CD8-positive, alpha-beta T cell (primary cell): ENCODE measurements at regions of chr20 and their contacts with region 1.

Region 1: DNA sequence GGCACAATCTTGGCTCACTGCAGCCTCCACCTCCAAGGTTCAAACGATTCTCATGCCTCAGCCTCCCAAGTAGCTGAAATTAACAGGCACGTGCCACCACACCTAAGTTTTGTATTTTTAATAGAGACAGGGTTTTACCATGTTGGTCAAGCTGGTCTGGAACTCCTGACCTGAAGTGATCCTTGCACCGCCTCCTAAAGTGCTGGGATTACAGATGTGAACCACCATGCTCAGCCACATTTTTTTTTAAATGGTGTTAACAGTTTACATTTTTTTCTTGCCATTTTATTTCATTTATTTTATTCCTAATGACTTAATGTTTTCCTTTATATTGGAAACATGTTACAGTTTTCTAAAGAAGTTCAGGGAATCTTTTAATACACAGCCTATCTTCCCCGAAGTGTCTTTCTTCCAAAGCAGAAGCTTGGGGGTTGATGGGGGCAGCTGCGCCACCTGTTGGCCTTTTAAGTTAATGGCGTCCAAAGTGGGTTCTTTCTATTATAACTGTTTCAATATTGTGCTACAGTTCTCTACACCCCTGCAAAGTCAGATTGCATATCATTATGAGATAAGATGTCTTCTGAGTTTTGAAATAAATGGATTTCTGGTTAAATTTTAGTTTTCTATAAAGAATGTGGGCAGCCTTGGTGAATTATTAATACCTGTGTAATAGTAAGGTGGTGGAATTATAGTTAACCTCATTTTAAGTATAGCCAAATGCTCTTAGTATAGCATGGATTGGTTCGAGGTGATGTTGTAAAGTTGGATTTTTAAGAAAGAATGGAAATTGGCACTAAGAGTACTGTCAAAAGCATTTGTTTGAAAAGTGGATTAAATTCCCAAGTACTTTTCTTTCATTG is 42.0 kb upstream of the PLCG1 start:
- DNase-seq: peak; percentile 13 to 78 (median 59)
- ATAC-seq: peak; percentile 84
- H3K4me3 ChIP-seq: no peak overlapping the region
- H3K4me3 Mint-ChIP-seq: no peak overlapping the region
- H3K27ac ChIP-seq: no peak overlapping the region
- H3K27ac Mint-ChIP-seq: no peak overlapping the region
- H3K4me1 ChIP-seq: peaks cover 2% of the 10 kb centered on the region
- H3K4me1 Mint-ChIP-seq: peaks cover 3% of the 10 kb centered on the region
- H3K27me3 ChIP-seq: no peaks in the 10 kb centered on the region
- H3K27me3 Mint-ChIP-seq: no peaks in the 10 kb centered on the region
- CTCF ChIP-seq: peak; percentile 85

Region 2: GRCh38 chr20:40970201-40970600 is 125.1 kb before region 1 on chr20:
- CTCF ChIA-PET with region 1: interaction called, 153 read pairs
- POLR2A ChIA-PET with region 1: interaction called, 5 read pairs
- intact Hi-C with region 1: loop called (anchors 1 kb)
- DNase-seq: peak in 1 of 9 experiments; percentile 44
- ATAC-seq: no peak
- H3K4me3 ChIP-seq: no peak overlapping the region
- H3K4me3 Mint-ChIP-seq: no peak overlapping the region
- H3K27ac ChIP-seq: no peak overlapping the region
- H3K27ac Mint-ChIP-seq: no peak overlapping the region
- H3K4me1 ChIP-seq: no peaks in the 10 kb centered on the region
- H3K4me1 Mint-ChIP-seq: peaks cover 7% of the 10 kb centered on the region
- H3K27me3 ChIP-seq: no peaks in the 10 kb centered on the region
- H3K27me3 Mint-ChIP-seq: peaks cover 3% of the 10 kb centered on the region
- CTCF ChIP-seq: no peak

Region 3: GRCh38 chr20:41038878-41039404 is 56.4 kb before region 1 on chr20:
- CTCF ChIA-PET with region 1: interaction called, 10 read pairs
- POLR2A ChIA-PET with region 1: no interaction called
- intact Hi-C with region 1: no loop called
- DNase-seq: no peak
- ATAC-seq: peak; percentile 47
- H3K4me3 ChIP-seq: no peak overlapping the region
- H3K4me3 Mint-ChIP-seq: no peak overlapping the region
- H3K27ac ChIP-seq: no peak overlapping the region
- H3K27ac Mint-ChIP-seq: no peak overlapping the region
- H3K4me1 ChIP-seq: peaks cover 65% of the 10 kb centered on the region
- H3K4me1 Mint-ChIP-seq: peaks cover 90% of the 10 kb centered on the region
- H3K27me3 ChIP-seq: no peaks in the 10 kb centered on the region
- H3K27me3 Mint-ChIP-seq: no peaks in the 10 kb centered on the region
- CTCF ChIP-seq: no peak

Region 4: DNA sequence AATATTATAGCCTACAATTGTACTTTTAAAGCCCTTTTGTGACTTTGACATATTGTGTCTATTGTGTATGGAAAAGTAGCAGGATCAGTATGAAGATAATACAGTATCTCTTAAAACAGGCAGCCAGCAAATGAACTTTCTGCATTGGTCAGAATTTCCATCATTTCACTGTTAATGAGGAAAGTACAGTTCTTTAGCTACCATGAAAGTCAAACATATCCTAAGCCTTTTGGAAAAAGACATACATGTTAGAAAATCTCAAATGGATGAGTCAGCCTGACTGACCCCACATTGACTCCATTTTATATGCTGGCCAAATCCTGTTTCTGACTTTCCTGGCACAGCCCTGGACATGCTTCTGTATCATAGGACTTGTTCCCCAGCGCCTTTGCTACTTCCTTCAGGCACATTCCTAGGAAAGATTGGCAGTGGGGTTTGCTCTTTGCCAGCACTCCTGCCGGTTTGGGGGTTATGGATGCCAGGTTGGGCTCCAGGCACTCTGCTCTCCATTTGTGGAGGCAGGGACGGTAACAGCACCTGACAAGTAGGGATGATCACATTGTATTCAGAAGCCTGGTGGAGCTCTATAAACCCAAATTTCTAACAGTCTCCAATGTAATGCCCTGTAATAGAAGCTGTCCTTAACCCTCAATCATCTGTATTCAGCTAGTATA is 23.0 kb before region 1 on chr20:
- CTCF ChIA-PET with region 1: interaction called, 10 read pairs
- POLR2A ChIA-PET with region 1: no interaction called
- intact Hi-C with region 1: no loop called
- DNase-seq: no peak
- ATAC-seq: no peak
- H3K4me3 ChIP-seq: no peak overlapping the region
- H3K4me3 Mint-ChIP-seq: peak overlapping the region; percentile 5
- H3K27ac ChIP-seq: no peak overlapping the region
- H3K27ac Mint-ChIP-seq: peak overlapping the region; percentile 11
- H3K4me1 ChIP-seq: peaks cover 35% of the 10 kb centered on the region
- H3K4me1 Mint-ChIP-seq: peaks cover 86% of the 10 kb centered on the region
- H3K27me3 ChIP-seq: no peaks in the 10 kb centered on the region
- H3K27me3 Mint-ChIP-seq: no peaks in the 10 kb centered on the region
- CTCF ChIP-seq: no peak

Region 5: DNA sequence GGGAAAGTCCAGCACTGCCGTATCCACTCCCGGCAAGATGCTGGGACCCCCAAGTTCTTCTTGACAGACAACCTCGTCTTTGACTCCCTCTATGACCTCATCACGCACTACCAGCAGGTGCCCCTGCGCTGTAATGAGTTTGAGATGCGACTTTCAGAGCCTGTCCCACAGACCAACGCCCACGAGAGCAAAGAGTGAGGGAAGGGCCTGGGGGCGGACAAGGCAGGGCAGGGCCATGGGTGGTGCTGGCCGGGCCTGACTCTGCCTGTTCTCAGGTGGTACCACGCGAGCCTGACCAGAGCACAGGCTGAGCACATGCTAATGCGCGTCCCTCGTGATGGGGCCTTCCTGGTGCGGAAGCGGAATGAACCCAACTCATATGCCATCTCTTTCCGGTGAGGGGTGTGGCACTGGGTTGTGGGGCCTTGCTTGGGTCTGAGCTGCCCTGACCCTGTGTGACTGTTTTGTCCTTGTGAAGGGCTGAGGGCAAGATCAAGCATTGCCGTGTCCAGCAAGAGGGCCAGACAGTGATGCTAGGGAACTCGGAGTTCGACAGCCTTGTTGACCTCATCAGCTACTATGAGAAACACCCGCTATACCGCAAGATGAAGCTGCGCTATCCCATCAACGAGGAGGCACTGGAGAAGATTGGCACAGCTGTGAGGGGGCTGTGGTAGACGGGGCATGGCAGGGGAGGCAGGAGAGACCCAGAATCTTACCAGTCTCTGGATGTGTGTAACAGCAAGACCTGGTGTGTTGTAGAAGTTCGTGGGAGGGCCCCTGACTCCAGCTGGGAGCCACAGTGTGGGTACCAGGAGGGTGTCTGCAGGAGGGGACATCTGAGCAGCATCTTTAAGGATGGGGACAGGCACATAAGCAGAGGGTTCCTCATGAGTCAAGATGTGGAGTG is 71.1 kb after region 1 on chr20:
- CTCF ChIA-PET with region 1: no interaction called
- POLR2A ChIA-PET with region 1: no interaction called
- intact Hi-C with region 1: no loop called
- DNase-seq: no peak
- ATAC-seq: no peak
- H3K4me3 ChIP-seq: no peak overlapping the region
- H3K4me3 Mint-ChIP-seq: no peak overlapping the region
- H3K27ac ChIP-seq: peak overlapping the region in 1 of 2 experiments; percentile 49
- H3K27ac Mint-ChIP-seq: peak overlapping the region; percentile 82
- H3K4me1 ChIP-seq: peaks cover 61% of the 10 kb centered on the region
- H3K4me1 Mint-ChIP-seq: peaks cover 60% of the 10 kb centered on the region
- H3K27me3 ChIP-seq: no peaks in the 10 kb centered on the region
- H3K27me3 Mint-ChIP-seq: no peaks in the 10 kb centered on the region
- CTCF ChIP-seq: no peak

Region 6: GRCh38 chr20:41339507-41340326 is 244.4 kb after region 1 on chr20:
- CTCF ChIA-PET with region 1: interaction called, 22 read pairs
- POLR2A ChIA-PET with region 1: no interaction called
- intact Hi-C with region 1: no loop called
- DNase-seq: peak; percentile 71 to 92 (median 86)
- ATAC-seq: peak; percentile 99
- H3K4me3 ChIP-seq: peak overlapping the region; percentile 15 to 25
- H3K4me3 Mint-ChIP-seq: peak overlapping the region; percentile 58
- H3K27ac ChIP-seq: no peak overlapping the region
- H3K27ac Mint-ChIP-seq: no peak overlapping the region
- H3K4me1 ChIP-seq: peaks cover 9% of the 10 kb centered on the region
- H3K4me1 Mint-ChIP-seq: peaks cover 9% of the 10 kb centered on the region
- H3K27me3 ChIP-seq: peaks cover 0 to 3% of the 10 kb centered on the region in 2 experiments
- H3K27me3 Mint-ChIP-seq: peaks cover 8% of the 10 kb centered on the region
- CTCF ChIP-seq: peak; percentile 99